Calu3 (cell line): ENCODE measurements at regions of chr15 and their contacts with region 1.

Region 1: GRCh38 chr15:61411902-61412510 is 182.9 kb upstream of the RORA start:
- DNase-seq: no peak
- H3K4me3 Mint-ChIP-seq: no peak overlapping the region
- H3K27ac Mint-ChIP-seq: no peak overlapping the region
- H3K4me1 Mint-ChIP-seq: no peaks in the 10 kb centered on the region
- H3K27me3 Mint-ChIP-seq: peaks cover 43% of the 10 kb centered on the region
- CTCF ChIP-seq: no peak

Region 2: GRCh38 chr15:61195116-61196002 is 216.6 kb before region 1 on chr15:
- CTCF ChIA-PET with region 1: no interaction called
- intact Hi-C with region 1: no loop called
- DNase-seq: no peak
- H3K4me3 Mint-ChIP-seq: no peak overlapping the region
- H3K27ac Mint-ChIP-seq: no peak overlapping the region
- H3K4me1 Mint-ChIP-seq: no peaks in the 10 kb centered on the region
- H3K27me3 Mint-ChIP-seq: peaks cover 80% of the 10 kb centered on the region
- CTCF ChIP-seq: peak; percentile 51

Region 3: DNA sequence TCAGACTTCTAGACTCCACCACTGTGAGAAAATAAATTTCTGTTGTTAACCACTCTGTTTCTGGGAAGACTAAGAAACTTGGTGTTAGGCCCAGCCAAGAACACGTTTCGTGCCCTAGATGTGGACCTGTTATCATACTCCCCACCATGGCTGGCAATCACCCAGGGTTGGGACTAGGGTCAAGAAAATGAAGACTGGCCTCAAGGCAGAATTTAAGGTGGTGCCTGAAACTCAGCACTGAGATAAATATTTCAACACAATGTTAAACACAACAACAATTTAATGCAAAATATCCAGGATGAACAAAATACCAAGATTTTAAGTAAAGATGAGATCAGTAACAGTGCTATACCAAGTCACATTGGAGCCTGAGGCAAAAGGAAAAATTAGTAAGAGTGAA is 11.6 kb before region 1 on chr15:
- CTCF ChIA-PET with region 1: no interaction called
- intact Hi-C with region 1: no loop called
- DNase-seq: no peak
- H3K4me3 Mint-ChIP-seq: no peak overlapping the region
- H3K27ac Mint-ChIP-seq: no peak overlapping the region
- H3K4me1 Mint-ChIP-seq: no peaks in the 10 kb centered on the region
- H3K27me3 Mint-ChIP-seq: peaks cover 54% of the 10 kb centered on the region
- CTCF ChIP-seq: no peak

Region 4: GRCh38 chr15:61441891-61442290 is 29.9 kb after region 1 on chr15:
- CTCF ChIA-PET with region 1: no interaction called
- intact Hi-C with region 1: no loop called
- DNase-seq: no peak
- H3K4me3 Mint-ChIP-seq: no peak overlapping the region
- H3K27ac Mint-ChIP-seq: no peak overlapping the region
- H3K4me1 Mint-ChIP-seq: no peaks in the 10 kb centered on the region
- H3K27me3 Mint-ChIP-seq: peaks cover 50% of the 10 kb centered on the region
- CTCF ChIP-seq: no peak

Region 5: DNA sequence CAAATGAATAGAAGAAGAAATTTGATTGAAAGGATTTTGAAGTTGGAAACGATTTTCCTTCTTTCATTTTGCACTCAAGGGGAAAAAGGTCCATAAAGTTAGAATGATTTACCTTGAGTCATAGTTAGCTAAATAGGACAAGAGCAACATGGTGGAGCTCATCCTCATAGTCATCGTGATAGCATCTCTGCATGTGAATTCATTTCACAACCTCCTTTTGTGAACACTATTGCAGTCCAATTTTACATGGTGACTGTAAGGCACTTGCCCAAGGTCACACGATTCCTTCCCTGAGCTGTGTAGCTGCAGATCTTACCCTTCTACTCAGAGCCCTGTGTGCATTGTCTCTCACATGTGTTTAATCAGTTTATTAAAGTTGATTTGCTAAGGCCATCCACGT is 1112.8 kb after region 1 on chr15:
- CTCF ChIA-PET with region 1: no interaction called
- intact Hi-C with region 1: loop called (anchors 5 kb)
- DNase-seq: no peak
- H3K4me3 Mint-ChIP-seq: no peak overlapping the region
- H3K27ac Mint-ChIP-seq: no peak overlapping the region
- H3K4me1 Mint-ChIP-seq: no peaks in the 10 kb centered on the region
- H3K27me3 Mint-ChIP-seq: peaks cover 60% of the 10 kb centered on the region
- CTCF ChIP-seq: no peak